ENCODE measurements at regions of chr4 and their contacts with region 1.

Region 1: GRCh38 chr4:102500696-102501446 is at the start of gene NFKB1:
- DNase-seq: peak; percentile 76
- ATAC-seq: peak; percentile 71
- H3K4me3 Mint-ChIP-seq: peak within 1 kb of the TSS; percentile 97
- H3K27ac Mint-ChIP-seq: peak within 1 kb of the TSS; percentile 95
- H3K4me1 Mint-ChIP-seq: peaks cover 31% of the 10 kb centered on the region
- H3K27me3 Mint-ChIP-seq: no peaks in the 10 kb centered on the region
- CTCF ChIP-seq: no peak
- total RNA-seq, gene NFKB1: 274 and 308 TPM in 2 replicates

Region 2: DNA sequence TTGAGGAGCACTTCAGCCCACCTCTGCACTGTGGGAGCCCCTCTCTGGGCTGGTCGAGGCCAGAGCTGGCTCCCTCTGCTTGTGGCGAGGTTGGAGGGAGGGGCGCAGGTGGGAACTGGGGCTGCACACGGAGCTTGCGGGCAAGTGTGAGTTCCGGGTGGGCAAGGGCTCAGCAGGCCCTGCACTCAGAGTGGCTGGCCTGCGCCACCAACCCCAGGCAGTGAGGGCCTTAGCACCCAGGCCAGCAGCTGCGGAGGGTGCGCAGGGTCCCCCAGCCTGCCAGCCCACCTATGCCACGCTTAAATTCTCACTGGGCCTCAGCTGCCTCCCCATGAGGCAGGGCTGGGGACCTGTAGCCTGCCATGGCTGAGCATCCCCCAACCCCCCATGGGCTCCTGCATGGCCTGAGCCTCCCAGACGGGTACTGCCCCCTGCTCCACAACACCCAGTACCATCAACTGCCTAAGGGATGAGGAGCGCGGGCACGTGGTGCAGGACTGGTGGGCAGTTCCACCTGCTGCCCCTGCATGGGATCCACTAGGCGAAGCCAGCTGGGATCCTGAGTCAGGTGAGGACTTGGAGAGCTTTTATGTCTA is 266.5 kb before region 1 on chr4:
- CTCF ChIA-PET with region 1: no interaction called
- POLR2A ChIA-PET with region 1: no interaction called
- intact Hi-C with region 1: no loop called
- DNase-seq: no peak
- ATAC-seq: no peak
- H3K4me3 Mint-ChIP-seq: no peak overlapping the region
- H3K27ac Mint-ChIP-seq: no peak overlapping the region
- H3K4me1 Mint-ChIP-seq: no peaks in the 10 kb centered on the region
- H3K27me3 Mint-ChIP-seq: peaks cover 2% of the 10 kb centered on the region
- CTCF ChIP-seq: no peak

Region 3: DNA sequence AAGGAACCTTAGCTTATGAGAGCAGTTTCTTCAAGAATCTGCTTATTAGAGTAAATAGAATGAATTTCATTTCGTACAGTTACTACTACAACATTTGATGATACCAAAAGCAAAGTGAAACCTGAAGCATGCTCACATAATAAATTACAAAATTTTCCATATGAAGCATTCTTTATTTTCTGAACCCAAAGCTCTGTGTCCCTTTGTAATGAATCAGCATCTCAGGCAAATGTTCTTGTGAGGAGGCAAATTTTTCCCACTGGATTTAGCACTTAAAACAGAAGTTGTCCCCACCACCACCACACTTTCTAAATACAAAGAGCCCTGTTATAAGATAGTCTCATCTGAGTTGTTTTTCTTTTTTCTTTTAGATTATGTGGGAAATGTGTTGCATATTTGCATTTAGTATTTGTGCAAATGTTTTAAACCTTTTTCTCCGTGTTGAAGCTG is 70.4 kb before region 1 on chr4:
- CTCF ChIA-PET with region 1: no interaction called
- POLR2A ChIA-PET with region 1: interaction called, 16 read pairs
- intact Hi-C with region 1: loop called (anchors 1 kb)
- DNase-seq: no peak
- ATAC-seq: no peak
- H3K4me3 Mint-ChIP-seq: peak overlapping the region; percentile 92
- H3K27ac Mint-ChIP-seq: peak overlapping the region; percentile 76
- H3K4me1 Mint-ChIP-seq: peaks cover 5% of the 10 kb centered on the region
- H3K27me3 Mint-ChIP-seq: no peaks in the 10 kb centered on the region
- CTCF ChIP-seq: no peak

Region 4: DNA sequence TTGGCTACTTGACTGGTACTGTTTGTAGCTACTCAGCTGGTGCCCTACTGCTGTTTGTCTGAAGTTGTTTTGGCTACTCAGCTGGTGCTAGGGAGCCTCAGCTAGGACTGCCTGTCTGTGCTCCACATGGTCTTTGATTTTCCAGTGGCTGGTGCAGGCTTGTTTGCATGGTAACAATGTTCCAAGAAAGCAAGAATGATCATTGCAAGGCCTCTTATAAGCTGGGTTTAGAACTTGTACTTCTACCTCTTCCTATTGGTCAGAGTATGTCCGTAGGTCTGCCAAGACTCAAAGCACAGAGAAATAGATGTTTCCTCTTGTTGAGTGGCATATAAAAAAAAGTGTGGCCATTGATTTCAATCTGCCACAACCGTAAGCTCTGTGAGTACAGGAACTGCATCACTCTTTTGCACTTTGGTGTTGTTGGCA is 17.8 kb after region 1 on chr4:
- CTCF ChIA-PET with region 1: interaction called, 3 read pairs
- POLR2A ChIA-PET with region 1: interaction called, 29 read pairs
- intact Hi-C with region 1: loop called (anchors 1 kb)
- DNase-seq: no peak
- ATAC-seq: no peak
- H3K4me3 Mint-ChIP-seq: peak overlapping the region; percentile 20
- H3K27ac Mint-ChIP-seq: no peak overlapping the region
- H3K4me1 Mint-ChIP-seq: peaks cover 76% of the 10 kb centered on the region
- H3K27me3 Mint-ChIP-seq: no peaks in the 10 kb centered on the region
- CTCF ChIP-seq: no peak

Region 5: DNA sequence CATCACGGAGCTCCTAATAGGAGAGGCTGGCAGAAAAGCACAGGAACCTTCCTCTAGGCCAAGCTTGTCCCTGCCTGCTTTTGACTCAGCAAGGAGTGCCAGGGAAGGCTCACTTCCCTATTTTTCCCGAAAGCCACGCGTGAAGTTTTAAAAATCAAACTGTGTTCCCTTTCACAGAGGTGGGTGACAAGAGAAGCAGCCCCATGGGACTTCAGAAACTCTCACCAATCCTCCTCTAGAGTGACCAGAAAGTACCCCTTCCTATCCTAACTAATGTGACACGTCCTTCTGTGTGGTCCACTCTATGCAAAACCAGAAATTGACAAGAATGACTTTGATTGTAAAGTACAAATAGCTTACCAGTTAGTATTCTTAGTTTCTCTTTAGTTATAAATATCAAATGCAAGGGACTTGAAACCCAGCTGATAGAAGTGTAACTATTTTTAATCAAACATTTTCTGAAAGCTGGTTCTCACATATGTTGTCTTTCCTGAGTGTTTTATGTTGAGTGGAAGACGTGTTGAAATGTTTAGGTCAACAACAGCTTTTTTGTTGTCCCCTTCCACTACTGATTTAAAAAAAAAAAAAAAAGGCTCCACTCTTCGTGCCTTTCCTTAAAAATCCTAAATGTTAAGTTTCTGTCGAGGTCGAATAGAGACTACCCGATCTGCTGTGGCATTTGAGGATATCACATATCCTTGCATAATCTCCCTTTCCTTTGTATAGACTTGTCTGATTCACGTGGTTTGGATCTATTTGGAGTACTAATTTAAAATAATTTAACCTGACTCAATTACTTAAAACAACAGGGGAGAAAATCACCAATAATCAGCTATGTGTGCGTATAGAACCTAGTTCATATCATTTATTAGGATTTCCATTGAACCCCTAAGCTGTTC is 42.4 kb after region 1 on chr4:
- CTCF ChIA-PET with region 1: no interaction called
- POLR2A ChIA-PET with region 1: interaction called, 12 read pairs
- intact Hi-C with region 1: loop called (anchors 5 kb)
- DNase-seq: no peak
- ATAC-seq: no peak
- H3K4me3 Mint-ChIP-seq: no peak overlapping the region
- H3K27ac Mint-ChIP-seq: peak overlapping the region; percentile 51
- H3K4me1 Mint-ChIP-seq: peaks cover 37% of the 10 kb centered on the region
- H3K27me3 Mint-ChIP-seq: no peaks in the 10 kb centered on the region
- CTCF ChIP-seq: no peak

Region 6: DNA sequence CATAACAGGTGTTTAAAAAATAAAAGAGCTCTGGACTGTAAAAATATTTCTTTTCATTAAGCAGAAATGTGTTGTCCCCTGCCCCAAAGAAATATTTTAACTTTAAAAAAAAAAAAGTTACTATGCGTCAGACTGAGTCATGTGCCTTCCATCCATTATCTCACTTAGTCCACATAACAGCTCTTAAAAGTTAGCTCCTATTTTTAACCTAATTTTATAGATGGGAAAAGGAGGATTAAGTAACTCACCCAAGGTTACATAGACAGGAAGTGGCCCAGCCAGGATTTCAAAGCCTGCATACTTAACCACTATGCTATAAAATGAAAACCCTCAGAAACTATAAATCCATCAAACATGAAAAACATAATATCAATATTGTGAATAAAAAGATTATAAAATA is 162.2 kb after region 1 on chr4:
- CTCF ChIA-PET with region 1: no interaction called
- POLR2A ChIA-PET with region 1: no interaction called
- intact Hi-C with region 1: no loop called
- DNase-seq: no peak
- ATAC-seq: no peak
- H3K4me3 Mint-ChIP-seq: no peak overlapping the region
- H3K27ac Mint-ChIP-seq: no peak overlapping the region
- H3K4me1 Mint-ChIP-seq: no peaks in the 10 kb centered on the region
- H3K27me3 Mint-ChIP-seq: no peaks in the 10 kb centered on the region
- CTCF ChIP-seq: no peak

Region 7: DNA sequence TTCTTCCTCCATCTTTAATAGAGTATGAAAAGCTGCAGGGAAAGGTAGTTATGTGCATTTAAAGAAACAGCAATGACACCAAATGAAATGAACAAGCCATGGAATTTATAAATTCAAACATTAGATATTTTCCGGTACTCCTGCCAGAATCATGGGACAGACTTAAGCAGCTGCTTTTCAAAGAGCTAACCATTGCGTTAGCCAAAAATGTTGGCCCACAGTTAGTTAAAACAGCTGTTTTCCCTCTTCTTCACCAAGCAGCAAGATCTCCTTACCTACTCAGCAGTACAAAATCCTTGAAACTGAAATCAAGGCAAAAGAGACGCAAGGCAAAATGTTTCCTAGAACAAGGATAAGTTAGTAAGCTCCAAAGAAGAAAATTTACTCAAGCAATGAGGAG is 195.9 kb after region 1 on chr4:
- CTCF ChIA-PET with region 1: no interaction called
- POLR2A ChIA-PET with region 1: no interaction called
- intact Hi-C with region 1: no loop called
- DNase-seq: no peak
- ATAC-seq: no peak
- H3K4me3 Mint-ChIP-seq: no peak overlapping the region
- H3K27ac Mint-ChIP-seq: no peak overlapping the region
- H3K4me1 Mint-ChIP-seq: no peaks in the 10 kb centered on the region
- H3K27me3 Mint-ChIP-seq: no peaks in the 10 kb centered on the region
- CTCF ChIP-seq: no peak

Region 8: GRCh38 chr4:102868781-102869568 is 368.1 kb after region 1 on chr4 and contains the start of gene CISD2:
- CTCF ChIA-PET with region 1: no interaction called
- POLR2A ChIA-PET with region 1: no interaction called
- intact Hi-C with region 1: loop called (anchors 2 kb)
- DNase-seq: peak; percentile 91
- ATAC-seq: peak; percentile 86
- H3K4me3 Mint-ChIP-seq: peak within 1 kb of the TSS; percentile 97
- H3K27ac Mint-ChIP-seq: peak within 1 kb of the TSS; percentile 97
- H3K4me1 Mint-ChIP-seq: peaks cover 51% of the 10 kb centered on the region
- H3K27me3 Mint-ChIP-seq: no peaks in the 10 kb centered on the region
- CTCF ChIP-seq: no peak
- total RNA-seq, gene CISD2: 12.6 and 13.7 TPM in 2 replicates